Activated naive CD4-positive, alpha-beta T cell treated with anti-CD3 and anti-CD28 coated beads for 36 hours (primary cell): ENCODE measurements at regions of chr11 and their contacts with region 1.

Region 1: DNA sequence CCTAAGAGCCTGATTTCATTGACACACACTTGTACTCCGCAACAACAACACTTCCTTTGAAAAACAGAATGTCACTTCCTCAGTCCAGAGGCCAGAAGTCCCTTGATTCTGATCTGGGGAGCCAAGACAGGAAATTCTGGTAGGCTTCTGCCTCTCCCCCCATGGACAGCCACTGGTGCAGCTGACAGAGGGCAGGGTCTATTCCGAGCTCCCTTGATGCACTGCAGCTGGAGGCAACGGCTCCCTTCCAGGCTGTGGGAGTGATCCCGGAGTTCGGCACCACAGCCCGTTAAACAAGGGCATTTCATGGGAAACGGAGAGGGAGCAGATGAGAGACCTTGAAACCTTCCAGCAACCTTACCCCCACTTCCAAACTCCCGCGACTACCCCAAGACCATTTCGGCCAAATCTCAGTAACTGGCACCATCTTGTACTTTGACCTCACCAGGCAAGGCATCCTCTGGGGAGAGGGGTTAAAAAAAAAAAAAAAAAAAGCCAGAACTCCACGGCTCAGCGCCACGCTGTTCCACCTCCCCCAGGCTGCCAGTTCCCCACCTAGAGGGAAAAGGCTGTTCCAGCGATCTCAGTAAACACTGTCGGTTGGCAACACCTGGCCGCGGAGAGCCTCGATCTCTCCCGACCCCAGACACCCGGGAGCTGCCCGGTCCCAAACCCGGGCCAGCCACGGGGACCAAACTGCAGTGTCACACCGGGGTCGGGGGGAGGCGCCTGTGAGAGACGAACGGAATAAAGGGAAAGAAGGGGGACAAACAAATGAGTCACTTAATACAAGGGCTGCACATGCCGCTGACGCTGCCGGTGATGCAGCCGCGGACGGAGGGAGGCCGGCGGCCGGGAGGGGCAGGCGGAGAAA is 1.1 kb downstream of the GAB2 start:
- DNase-seq: peak; percentile 88
- H3K4me3 Mint-ChIP-seq: peak overlapping the region; percentile 81
- H3K27ac Mint-ChIP-seq: peak overlapping the region; percentile 44
- H3K4me1 Mint-ChIP-seq: peaks cover 22% of the 10 kb centered on the region
- H3K27me3 Mint-ChIP-seq: peaks cover 33% of the 10 kb centered on the region

Region 2: GRCh38 chr11:78139422-78140391 is 276.8 kb before region 1 on chr11 and contains the start of gene ALG8:
- CTCF ChIA-PET with region 1: interaction called, 4 read pairs
- intact Hi-C with region 1: loop called (anchors 2 kb)
- DNase-seq: peak; percentile 97
- H3K4me3 Mint-ChIP-seq: peak within 1 kb of the TSS; percentile 85
- H3K27ac Mint-ChIP-seq: peak within 1 kb of the TSS; percentile 90
- H3K4me1 Mint-ChIP-seq: peaks cover 33% of the 10 kb centered on the region
- H3K27me3 Mint-ChIP-seq: no peaks in the 10 kb centered on the region
- total RNA-seq, gene ALG8: 35.1 to 35.9 TPM

Region 3: GRCh38 chr11:78379039-78379670 is 37.4 kb before region 1 on chr11:
- CTCF ChIA-PET with region 1: no interaction called
- intact Hi-C with region 1: no loop called
- DNase-seq: no peak
- H3K4me3 Mint-ChIP-seq: no peak overlapping the region
- H3K27ac Mint-ChIP-seq: no peak overlapping the region
- H3K4me1 Mint-ChIP-seq: no peaks in the 10 kb centered on the region
- H3K27me3 Mint-ChIP-seq: no peaks in the 10 kb centered on the region

Region 4: DNA sequence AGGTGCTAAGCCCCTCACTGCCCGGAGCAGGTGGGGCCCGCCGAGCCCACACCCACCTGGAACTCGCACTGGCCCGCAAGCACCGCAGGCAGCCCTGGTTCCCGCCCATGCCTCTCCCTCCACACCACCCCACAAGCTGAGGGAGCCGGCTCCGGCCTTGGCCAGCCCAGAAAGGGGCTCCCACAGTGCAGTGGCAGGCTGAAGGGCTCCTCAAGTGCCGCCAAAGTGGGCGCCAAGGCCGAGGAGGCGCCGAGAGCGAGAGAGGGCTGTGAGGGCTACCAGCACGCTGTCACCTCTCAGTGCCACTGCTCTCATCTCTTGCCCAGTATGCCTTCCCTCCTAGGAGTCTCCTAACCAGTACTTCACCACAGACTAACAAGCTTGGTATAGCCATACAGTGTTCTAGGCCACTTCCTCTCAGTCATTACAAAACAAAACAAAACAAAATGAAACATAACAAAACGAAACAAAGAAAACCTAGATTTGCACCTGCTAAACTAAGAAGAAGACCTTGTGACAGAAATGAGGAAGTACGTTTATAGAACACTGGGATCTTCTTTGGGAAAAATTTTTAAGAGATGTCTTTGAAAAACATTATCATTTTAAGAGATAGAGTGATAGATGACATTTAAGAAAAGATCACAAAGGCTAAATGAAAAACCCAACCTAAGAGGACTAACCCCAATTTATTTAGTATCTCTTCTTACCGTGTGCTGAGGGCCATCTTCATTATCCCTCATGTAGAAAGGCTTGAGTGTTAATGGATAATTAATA is 48.8 kb after region 1 on chr11:
- CTCF ChIA-PET with region 1: interaction called, 4 read pairs
- intact Hi-C with region 1: loop called (anchors 2 kb)
- DNase-seq: peak; percentile 51
- H3K4me3 Mint-ChIP-seq: no peak overlapping the region
- H3K27ac Mint-ChIP-seq: peak overlapping the region; percentile 65
- H3K4me1 Mint-ChIP-seq: peaks cover 18% of the 10 kb centered on the region
- H3K27me3 Mint-ChIP-seq: no peaks in the 10 kb centered on the region

Region 5: GRCh38 chr11:78574386-78575381 is 158.1 kb after region 1 on chr11 and contains the start of gene NARS2:
- CTCF ChIA-PET with region 1: interaction called, 6 read pairs
- intact Hi-C with region 1: loop called (anchors 1 kb)
- DNase-seq: peak; percentile 99
- H3K4me3 Mint-ChIP-seq: peak within 1 kb of the TSS; percentile 92
- H3K27ac Mint-ChIP-seq: peak within 1 kb of the TSS; percentile 84
- H3K4me1 Mint-ChIP-seq: peaks cover 23% of the 10 kb centered on the region
- H3K27me3 Mint-ChIP-seq: no peaks in the 10 kb centered on the region
- total RNA-seq, gene NARS2: 27.7 to 28.3 TPM

Region 6: GRCh38 chr11:78715639-78716311 is 299.2 kb after region 1 on chr11:
- CTCF ChIA-PET with region 1: no interaction called
- intact Hi-C with region 1: loop called (anchors 2 kb)
- DNase-seq: peak; percentile 77
- H3K4me3 Mint-ChIP-seq: no peak overlapping the region
- H3K27ac Mint-ChIP-seq: no peak overlapping the region
- H3K4me1 Mint-ChIP-seq: no peaks in the 10 kb centered on the region
- H3K27me3 Mint-ChIP-seq: no peaks in the 10 kb centered on the region